Tibial artery (tissue), 4 donors: ENCODE measurements at regions of chr10 and their contacts with region 1.

Region 1: DNA sequence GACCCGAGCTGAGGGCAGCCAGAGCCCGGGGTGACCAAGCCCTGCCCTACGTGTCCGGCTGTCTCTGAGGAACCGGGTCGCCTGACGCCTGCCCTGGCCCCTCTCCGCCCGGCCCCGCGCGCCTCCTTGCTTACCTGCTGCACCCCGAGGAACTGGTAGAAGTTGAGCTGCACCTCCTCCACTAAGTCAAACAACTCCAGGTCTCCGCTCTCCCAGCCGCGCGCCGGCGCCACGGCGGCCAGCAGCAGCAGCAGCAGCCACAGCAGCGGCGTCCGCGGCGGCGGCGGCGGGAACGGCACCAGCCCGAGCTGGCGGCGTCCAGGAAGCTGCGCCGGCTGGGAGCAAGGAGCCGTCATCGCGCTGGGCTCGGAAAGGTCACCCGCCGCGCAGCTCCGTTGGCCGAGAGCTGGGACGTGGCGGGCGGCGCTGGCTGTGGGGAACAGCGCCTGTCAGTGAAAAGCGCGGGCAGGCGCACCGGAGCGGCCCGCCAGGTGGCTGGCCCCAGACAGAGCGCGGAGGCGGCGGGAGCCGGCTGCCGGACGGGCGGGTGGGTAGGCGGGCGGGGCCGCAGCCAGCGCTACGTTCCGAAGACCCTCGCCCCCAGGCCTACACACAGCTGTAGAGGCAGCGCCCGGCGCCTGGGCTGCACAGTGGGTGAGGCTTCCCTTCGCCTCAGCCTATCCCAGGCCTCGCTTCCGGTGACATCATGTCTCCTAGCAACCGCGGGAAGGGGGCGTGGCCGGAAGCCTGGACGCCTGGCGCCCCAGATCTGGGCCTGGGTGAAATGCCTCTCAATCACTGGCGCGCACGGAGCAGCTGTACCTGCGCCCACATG is at the start of gene DNAJC1:
- DNase-seq: peak; percentile 97 to 98
- H3K4me3 ChIP-seq: peak within 1 kb of the TSS; percentile 82 to 91
- H3K27ac ChIP-seq: peak within 1 kb of the TSS; percentile 92 to 93
- H3K4me1 ChIP-seq: peaks cover 0 to 9% (median 5%) of the 10 kb centered on the region in 4 donors
- H3K27me3 ChIP-seq: no peaks in the 10 kb centered on the region
- CTCF ChIP-seq: peak in 1 of 2 experiments; percentile 28

Region 2: DNA sequence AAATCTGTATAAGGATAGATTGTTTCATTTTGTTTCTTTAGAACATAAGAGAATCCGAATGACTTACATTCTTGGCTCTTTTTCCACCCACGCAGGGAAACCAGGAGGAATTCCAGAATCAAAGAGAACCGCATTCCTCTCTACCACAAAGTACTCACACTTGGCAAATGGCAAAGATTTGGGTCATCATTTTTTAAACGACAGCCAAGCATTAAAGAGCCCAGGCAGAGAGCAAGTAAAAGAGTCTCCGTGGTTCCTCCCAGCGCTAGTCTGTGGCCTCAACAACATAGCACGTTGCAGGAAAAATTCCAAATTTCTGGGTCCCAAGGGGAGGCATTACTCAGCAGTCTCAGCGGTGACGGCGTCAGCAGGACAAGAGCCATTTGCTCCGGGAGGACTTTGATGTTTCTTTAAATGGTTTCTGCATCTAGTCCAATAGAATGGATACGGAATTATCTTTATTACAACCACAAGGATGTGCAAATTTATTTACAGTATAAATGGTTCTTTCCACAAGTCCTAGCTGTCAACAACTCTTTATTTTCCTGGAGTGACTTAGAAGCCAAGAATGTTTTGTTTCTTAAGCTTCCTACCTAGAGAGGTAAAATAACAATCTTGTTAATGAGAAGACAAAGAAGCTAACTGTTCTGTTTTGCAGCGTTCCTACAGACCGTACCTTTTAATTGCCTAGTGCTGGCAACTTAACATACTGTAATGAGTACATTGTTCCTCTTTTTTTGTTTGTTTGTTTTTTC is 710.4 kb before region 1 on chr10:
- intact Hi-C with region 1: no loop called
- DNase-seq: peak; percentile 80 to 87
- H3K4me3 ChIP-seq: peak overlapping the region; percentile 21 to 35
- H3K27ac ChIP-seq: peak overlapping the region in 1 of 2 donors; percentile 32
- H3K4me1 ChIP-seq: peaks cover 0 to 14% (median 6%) of the 10 kb centered on the region in 4 donors
- H3K27me3 ChIP-seq: no peaks in the 10 kb centered on the region
- CTCF ChIP-seq: no peak

Region 3: GRCh38 chr10:21926949-21927348 is 76.3 kb before region 1 on chr10:
- intact Hi-C with region 1: no loop called
- DNase-seq: no peak
- H3K4me3 ChIP-seq: no peak overlapping the region
- H3K27ac ChIP-seq: no peak overlapping the region
- H3K4me1 ChIP-seq: peaks cover 0 to 16% (median 2%) of the 10 kb centered on the region in 4 donors
- H3K27me3 ChIP-seq: no peaks in the 10 kb centered on the region
- CTCF ChIP-seq: no peak

Region 4: GRCh38 chr10:22228943-22229801 is 225.9 kb after region 1 on chr10:
- intact Hi-C with region 1: loop called (anchors 10 kb)
- DNase-seq: peak; percentile 88 to 92
- H3K4me3 ChIP-seq: peak overlapping the region; percentile 60 to 69
- H3K27ac ChIP-seq: peak overlapping the region; percentile 78 to 84
- H3K4me1 ChIP-seq: peaks cover 0 to 5% (median 0%) of the 10 kb centered on the region in 4 donors
- H3K27me3 ChIP-seq: no peaks in the 10 kb centered on the region
- CTCF ChIP-seq: peak in 1 of 2 experiments; percentile 5

Region 5: GRCh38 chr10:22340362-22341189 is 337.3 kb after region 1 on chr10:
- intact Hi-C with region 1: loop called (anchors 10 kb)
- DNase-seq: peak; percentile 54 to 79
- H3K4me3 ChIP-seq: peak overlapping the region; percentile 73 to 75
- H3K27ac ChIP-seq: peak overlapping the region; percentile 95 to 96
- H3K4me1 ChIP-seq: peaks cover 0 to 39% (median 27%) of the 10 kb centered on the region in 4 donors
- H3K27me3 ChIP-seq: peaks cover 21 to 82% of the 10 kb centered on the region in 2 donors
- CTCF ChIP-seq: no peak